ENCODE measurements at regions of chr1 and their contacts with region 1.

Region 1: GRCh38 chr1:81305997-81306452 is 494.7 kb upstream of the ADGRL2 start:
- DNase-seq: no peak
- H3K4me3 ChIP-seq: peak overlapping the region; percentile 55 to 66
- H3K27ac ChIP-seq: no peak overlapping the region
- H3K4me1 ChIP-seq: no peaks in the 10 kb centered on the region
- H3K27me3 ChIP-seq: no peaks in the 10 kb centered on the region
- CTCF ChIP-seq: peak in 2 of 3 experiments; percentile 15 to 52

Region 2: GRCh38 chr1:81756872-81757271 is 450.8 kb after region 1 on chr1:
- intact Hi-C with region 1: loop called (anchors 10 kb)
- DNase-seq: no peak
- H3K4me3 ChIP-seq: no peak overlapping the region
- H3K27ac ChIP-seq: no peak overlapping the region
- H3K4me1 ChIP-seq: peaks cover 0 to 3% of the 10 kb centered on the region in 2 donors
- H3K27me3 ChIP-seq: no peaks in the 10 kb centered on the region
- CTCF ChIP-seq: no peak

Measured in ascending aorta (tissue), 2 donors.